ENCODE measurements at regions of chr1 and their contacts with region 1.

Region 1: GRCh38 chr1:155208541-155209311 is at the start of gene MTX1:
- DNase-seq: no peak
- H3K4me3 ChIP-seq: peak within 1 kb of the TSS; percentile 57
- H3K27me3 ChIP-seq: no peaks in the 10 kb centered on the region
- CTCF ChIP-seq: no peak
- polyA plus RNA-seq, gene MTX1: 56.5 and 72.7 TPM in 2 replicates

Region 2: GRCh38 chr1:155193275-155193990 is 15.3 kb before region 1 on chr1:
- CTCF ChIA-PET with region 1: interaction called, 79 read pairs
- POLR2A ChIA-PET with region 1: interaction called, 12 read pairs
- DNase-seq: peak; percentile 76
- H3K4me3 ChIP-seq: peak overlapping the region; percentile 64
- H3K27me3 ChIP-seq: no peaks in the 10 kb centered on the region
- CTCF ChIP-seq: peak; percentile 99

Region 3: DNA sequence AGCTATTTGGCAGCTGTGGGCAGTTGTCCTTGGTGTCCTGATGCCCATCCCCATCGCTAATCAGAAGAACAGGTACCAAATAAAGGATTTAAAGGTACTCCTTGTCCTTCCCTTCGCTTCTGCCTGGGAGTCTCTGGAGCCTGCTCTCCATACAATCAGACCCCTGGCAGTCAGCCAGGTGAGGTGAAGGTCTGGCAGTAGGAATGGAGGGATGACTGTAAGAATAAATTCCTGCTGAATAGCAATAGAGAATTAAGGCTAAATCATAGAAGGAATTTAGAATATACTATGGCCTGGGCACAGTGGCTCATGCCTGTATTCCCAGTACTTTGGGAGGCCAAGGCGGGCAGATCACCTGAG is 10.2 kb before region 1 on chr1:
- CTCF ChIA-PET with region 1: interaction called, 79 read pairs
- POLR2A ChIA-PET with region 1: interaction called, 12 read pairs
- DNase-seq: no peak
- H3K4me3 ChIP-seq: no peak overlapping the region
- H3K27me3 ChIP-seq: no peaks in the 10 kb centered on the region
- CTCF ChIP-seq: no peak

Region 4: DNA sequence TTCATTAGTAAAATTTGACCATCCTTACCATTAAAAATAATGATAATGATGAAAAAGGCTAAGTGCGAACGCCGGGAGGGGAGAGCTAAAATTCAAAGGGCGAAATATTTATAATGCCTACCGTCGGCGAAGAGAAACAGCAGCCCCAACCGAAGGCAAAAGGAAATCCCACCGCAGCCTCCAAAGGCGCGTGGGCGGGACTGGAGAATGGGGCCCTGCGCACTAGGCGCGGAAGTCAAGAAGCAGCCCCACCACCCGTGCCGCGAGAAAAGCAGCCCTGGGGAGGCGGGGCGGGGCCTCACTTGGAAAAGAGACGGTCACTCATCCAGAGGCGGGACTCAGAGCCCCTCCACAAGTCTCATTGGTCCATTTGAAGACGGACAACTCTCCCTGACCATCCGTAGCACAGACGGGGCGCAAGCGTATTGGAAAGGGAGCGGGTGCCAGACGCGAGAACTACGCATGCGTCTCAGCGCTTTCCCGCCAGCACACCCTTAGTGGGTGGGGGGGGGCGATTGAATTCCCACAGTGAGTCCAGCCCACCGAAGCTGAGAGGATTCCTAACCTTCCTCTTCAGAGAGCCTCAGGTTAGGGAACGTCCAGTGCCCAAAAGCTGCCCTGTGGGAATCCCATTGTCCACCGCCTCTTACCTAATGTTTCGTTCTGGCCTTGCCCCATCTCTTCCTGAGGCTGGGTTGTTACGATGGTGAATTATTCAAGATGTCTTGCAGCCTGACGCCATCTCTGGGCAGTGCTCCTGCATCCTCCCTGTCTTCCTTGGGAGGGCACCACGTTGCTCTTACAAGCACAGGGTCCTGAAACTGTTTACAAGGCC is 18.8 kb after region 1 on chr1:
- CTCF ChIA-PET with region 1: interaction called, 75 read pairs
- POLR2A ChIA-PET with region 1: no interaction called
- DNase-seq: peak; percentile 95
- H3K4me3 ChIP-seq: peak overlapping the region; percentile 51
- H3K27me3 ChIP-seq: no peaks in the 10 kb centered on the region
- CTCF ChIP-seq: peak; percentile 21; the same call in 1 of the 2 replicates

Region 5: DNA sequence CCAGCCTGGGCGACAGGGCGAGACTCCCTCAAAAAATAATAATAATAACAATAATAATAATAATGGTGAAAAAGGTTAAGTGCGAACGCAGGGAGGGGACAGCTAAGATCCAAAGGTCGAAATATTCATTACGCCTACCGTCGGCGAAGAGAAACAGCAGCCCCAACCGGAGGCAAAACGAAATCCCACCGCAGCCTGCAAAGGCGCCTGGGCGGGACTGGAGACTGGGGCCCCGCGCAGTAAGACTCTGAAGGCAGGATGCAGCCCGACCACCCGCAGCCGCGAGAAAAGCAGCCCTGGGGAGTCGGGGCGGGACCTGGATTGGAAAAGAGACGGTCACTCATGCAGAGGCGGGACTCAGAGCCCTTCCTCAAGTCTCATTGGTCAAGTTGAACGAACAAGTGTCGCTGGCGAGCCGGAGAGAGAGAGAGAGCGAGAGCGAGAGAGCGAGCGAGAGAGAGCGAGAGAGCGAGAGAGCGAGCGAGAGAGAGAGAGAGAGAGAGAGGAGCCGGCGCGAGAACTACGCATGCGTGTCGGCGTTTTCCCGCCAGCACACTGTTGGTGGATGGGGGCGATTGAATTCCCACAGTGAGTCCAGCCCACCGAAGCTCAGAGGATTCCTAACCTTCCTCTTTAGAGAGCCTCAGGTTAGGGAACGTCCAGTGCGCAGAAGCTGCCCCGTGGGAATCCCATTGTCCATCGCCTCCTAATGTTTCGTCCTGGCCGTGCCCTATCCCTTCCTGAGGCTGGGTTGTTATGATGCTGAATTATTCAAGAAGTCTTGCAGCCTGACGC is 35.8 kb after region 1 on chr1:
- CTCF ChIA-PET with region 1: interaction called, 32 read pairs
- POLR2A ChIA-PET with region 1: no interaction called
- DNase-seq: peak; percentile 97
- H3K4me3 ChIP-seq: peak overlapping the region; percentile 53
- H3K27me3 ChIP-seq: no peaks in the 10 kb centered on the region
- CTCF ChIP-seq: peak; percentile 21; the same call in 1 of the 2 replicates

Region 6: DNA sequence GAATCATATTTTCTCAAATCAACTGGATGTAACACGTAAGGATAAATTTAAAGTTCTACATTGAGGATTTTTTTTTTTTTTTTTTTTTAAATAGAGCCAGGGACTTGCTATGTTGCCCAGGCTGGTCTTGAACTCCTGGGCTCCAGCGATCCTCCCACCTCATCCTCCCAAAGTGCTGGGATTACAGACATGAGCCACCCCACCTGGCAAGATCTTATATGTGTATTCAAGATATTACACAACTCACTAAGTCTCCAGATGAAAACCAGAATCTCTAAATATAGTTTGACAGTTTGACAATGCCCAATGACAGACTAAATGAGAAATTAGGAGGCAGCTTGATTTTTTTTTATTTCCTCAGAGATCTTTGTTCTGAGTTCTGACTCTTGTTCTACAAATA is 473.1 kb after region 1 on chr1:
- CTCF ChIA-PET with region 1: no interaction called
- POLR2A ChIA-PET with region 1: no interaction called
- DNase-seq: no peak
- H3K4me3 ChIP-seq: no peak overlapping the region
- H3K27me3 ChIP-seq: no peaks in the 10 kb centered on the region
- CTCF ChIP-seq: no peak